Naive thymus-derived CD4-positive, alpha-beta T cell (primary cell): ENCODE measurements at regions of chrX and their contacts with region 1.

Region 1: DNA sequence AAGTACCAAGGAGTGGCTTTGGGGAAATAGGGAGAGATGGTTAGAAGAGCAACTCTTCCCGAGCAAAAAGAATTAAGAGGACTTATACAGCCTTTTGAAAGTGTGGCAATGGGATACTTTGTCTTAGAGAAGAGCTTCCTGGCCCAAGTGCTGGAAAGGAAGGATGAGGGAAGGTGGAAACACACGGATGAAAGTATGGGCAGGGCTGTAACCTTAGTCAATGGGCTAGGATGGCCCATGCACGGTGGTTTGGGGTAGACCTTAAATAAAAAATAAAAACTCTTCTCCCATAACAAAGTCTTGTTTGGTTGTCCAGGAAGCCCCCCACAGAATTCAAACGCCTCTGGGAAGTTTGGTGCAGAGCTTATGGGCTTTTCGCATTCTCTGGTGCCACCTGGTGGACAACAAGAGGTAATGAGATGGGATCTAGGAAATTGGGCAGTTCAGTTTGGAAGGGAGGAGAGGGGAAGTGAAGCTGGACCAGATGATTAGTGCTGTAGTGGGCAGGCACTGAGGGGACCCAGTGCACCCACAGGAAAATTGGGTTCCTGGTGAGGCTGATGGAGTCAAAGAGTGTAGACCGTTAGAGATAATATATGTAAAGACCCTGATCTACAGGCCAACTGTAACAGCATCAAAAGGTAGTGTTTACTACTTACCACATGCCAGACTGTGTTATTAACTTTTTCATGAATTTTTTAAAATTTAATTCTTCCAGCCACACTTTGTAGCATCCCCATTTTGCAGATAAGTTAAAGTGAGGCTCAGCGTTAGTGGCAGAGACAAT is 13.8 kb upstream of the ENOX2 start:
- DNase-seq: peak; percentile 5 to 46 (median 31)
- ATAC-seq: peak; percentile 70
- H3K4me3 ChIP-seq: no peak overlapping the region
- H3K4me3 Mint-ChIP-seq: no peak overlapping the region
- H3K27ac ChIP-seq: no peak overlapping the region
- H3K27ac Mint-ChIP-seq: no peak overlapping the region
- H3K4me1 ChIP-seq: no peaks in the 10 kb centered on the region
- H3K4me1 Mint-ChIP-seq: no peaks in the 10 kb centered on the region
- H3K27me3 ChIP-seq: no peaks in the 10 kb centered on the region
- H3K27me3 Mint-ChIP-seq: peaks cover 0 to 2% (median 0%) of the 10 kb centered on the region in 5 donors

Region 2: GRCh38 chrX:129600981-129601424 is 1315.8 kb before region 1 on chrX:
- CTCF ChIA-PET with region 1: no interaction called
- POLR2A ChIA-PET with region 1: no interaction called
- intact Hi-C with region 1: loop called in 1 of 2 experiments (anchors 2 kb)
- DNase-seq: peak in 5 of 9 donors; percentile 16 to 36 (median 27)
- ATAC-seq: peak; percentile 55
- H3K4me3 ChIP-seq: no peak overlapping the region
- H3K4me3 Mint-ChIP-seq: no peak overlapping the region
- H3K27ac ChIP-seq: no peak overlapping the region
- H3K27ac Mint-ChIP-seq: peak overlapping the region in 4 of 9 donors; percentile 3 to 47 (median 20)
- H3K4me1 ChIP-seq: peaks cover 5 to 7% of the 10 kb centered on the region in 2 donors
- H3K4me1 Mint-ChIP-seq: peaks cover 3 to 27% (median 14%) of the 10 kb centered on the region in 7 donors
- H3K27me3 ChIP-seq: no peaks in the 10 kb centered on the region
- H3K27me3 Mint-ChIP-seq: no peaks in the 10 kb centered on the region

Region 3: DNA sequence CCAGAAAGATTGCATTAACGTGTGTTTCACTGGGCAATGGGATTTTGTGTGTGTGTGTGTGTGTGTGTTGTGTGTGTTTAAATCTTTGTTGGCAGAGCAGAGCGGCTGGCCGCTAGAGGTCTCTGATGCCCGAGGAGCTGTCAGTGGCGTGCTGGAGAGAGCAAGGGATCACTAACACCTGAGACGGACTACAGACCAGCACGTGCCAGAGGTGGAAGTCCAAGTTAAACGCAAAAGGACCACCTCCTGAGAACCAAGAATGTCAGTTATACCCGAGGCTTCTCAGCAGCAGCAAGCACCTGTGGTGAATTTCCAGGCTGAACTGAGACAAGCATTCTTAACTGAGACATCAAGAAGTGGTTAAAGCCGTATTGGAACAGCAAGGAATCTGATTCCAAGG is 586.1 kb before region 1 on chrX:
- CTCF ChIA-PET with region 1: interaction called, 3 read pairs
- POLR2A ChIA-PET with region 1: no interaction called
- intact Hi-C with region 1: loop called (anchors 1 kb)
- DNase-seq: peak in 4 of 9 donors; percentile 8 to 19 (median 14)
- ATAC-seq: peak; percentile 49
- H3K4me3 ChIP-seq: no peak overlapping the region
- H3K4me3 Mint-ChIP-seq: no peak overlapping the region
- H3K27ac ChIP-seq: no peak overlapping the region
- H3K27ac Mint-ChIP-seq: no peak overlapping the region
- H3K4me1 ChIP-seq: no peaks in the 10 kb centered on the region
- H3K4me1 Mint-ChIP-seq: peaks cover 0 to 2% (median 0%) of the 10 kb centered on the region in 7 donors
- H3K27me3 ChIP-seq: no peaks in the 10 kb centered on the region
- H3K27me3 Mint-ChIP-seq: peaks cover 5 to 23% (median 15%) of the 10 kb centered on the region in 5 donors

Region 4: GRCh38 chrX:130539721-130540321 is 377.0 kb before region 1 on chrX:
- CTCF ChIA-PET with region 1: interaction called, 7 read pairs
- POLR2A ChIA-PET with region 1: no interaction called
- intact Hi-C with region 1: loop called in 1 of 2 experiments (anchors 1 kb)
- DNase-seq: peak in 6 of 9 donors; percentile 16 to 39 (median 23)
- ATAC-seq: no peak
- H3K4me3 ChIP-seq: no peak overlapping the region
- H3K4me3 Mint-ChIP-seq: no peak overlapping the region
- H3K27ac ChIP-seq: no peak overlapping the region
- H3K27ac Mint-ChIP-seq: no peak overlapping the region
- H3K4me1 ChIP-seq: no peaks in the 10 kb centered on the region
- H3K4me1 Mint-ChIP-seq: no peaks in the 10 kb centered on the region
- H3K27me3 ChIP-seq: no peaks in the 10 kb centered on the region
- H3K27me3 Mint-ChIP-seq: peaks cover 0 to 7% (median 0%) of the 10 kb centered on the region in 5 donors

Region 5: DNA sequence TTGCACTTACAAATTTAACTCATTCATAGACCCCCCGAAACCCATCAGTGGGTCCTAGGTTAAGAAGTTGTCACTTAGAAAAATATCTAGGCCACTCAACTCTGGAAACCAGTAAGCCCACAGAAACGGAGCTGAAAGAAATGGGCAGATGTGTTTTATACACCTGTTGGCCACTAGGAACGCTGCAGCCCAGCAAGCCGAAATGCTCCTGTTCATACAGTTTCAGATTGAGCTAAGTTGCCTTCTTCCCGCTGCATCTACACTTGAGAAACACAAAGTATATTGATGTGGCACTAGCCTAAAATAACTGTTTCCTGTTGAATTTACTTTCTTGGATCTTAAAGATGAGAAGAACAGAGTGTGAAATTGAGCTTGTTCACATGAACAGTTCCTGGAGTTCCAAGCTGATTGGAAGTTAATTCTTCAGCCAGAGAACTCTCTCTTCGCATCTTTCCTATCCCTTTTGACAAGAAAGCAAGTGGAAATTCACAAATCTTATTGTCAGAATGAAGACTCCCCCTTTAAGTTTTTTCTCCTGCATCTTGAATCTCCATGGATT is 340.9 kb before region 1 on chrX:
- CTCF ChIA-PET with region 1: interaction called, 4 read pairs
- POLR2A ChIA-PET with region 1: no interaction called
- intact Hi-C with region 1: loop called in 1 of 2 experiments (anchors 1 kb)
- DNase-seq: peak in 3 of 9 donors; percentile 3 to 19 (median 7)
- ATAC-seq: no peak
- H3K4me3 ChIP-seq: no peak overlapping the region
- H3K4me3 Mint-ChIP-seq: peak overlapping the region in 1 of 10 donors; percentile 45
- H3K27ac ChIP-seq: no peak overlapping the region
- H3K27ac Mint-ChIP-seq: no peak overlapping the region
- H3K4me1 ChIP-seq: no peaks in the 10 kb centered on the region
- H3K4me1 Mint-ChIP-seq: no peaks in the 10 kb centered on the region
- H3K27me3 ChIP-seq: no peaks in the 10 kb centered on the region
- H3K27me3 Mint-ChIP-seq: peaks cover 0 to 12% (median 7%) of the 10 kb centered on the region in 5 donors

Region 6: DNA sequence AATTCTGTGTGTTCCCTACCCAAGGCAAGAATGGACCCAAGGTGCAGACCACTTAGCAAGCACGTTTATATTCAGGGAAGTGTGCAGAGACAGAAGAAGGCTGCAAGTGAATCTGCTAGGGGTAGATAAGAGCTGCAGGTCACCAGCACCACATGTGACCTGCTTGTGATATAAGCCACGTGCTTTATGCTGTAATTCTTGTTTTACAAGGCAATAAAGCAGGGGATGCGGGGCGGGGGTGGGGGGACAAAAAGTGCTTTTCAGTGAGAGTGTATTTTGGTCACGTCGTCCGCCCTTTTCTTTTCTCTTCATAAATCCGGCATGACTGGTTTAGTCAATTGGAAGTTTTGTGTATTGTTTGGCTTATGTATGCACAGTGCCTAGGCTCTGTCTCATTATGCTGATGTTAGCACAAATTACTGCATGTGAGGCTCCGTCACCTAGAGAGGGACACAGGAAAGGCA is 322.3 kb before region 1 on chrX:
- CTCF ChIA-PET with region 1: no interaction called
- POLR2A ChIA-PET with region 1: no interaction called
- intact Hi-C with region 1: no loop called
- DNase-seq: no peak
- ATAC-seq: no peak
- H3K4me3 ChIP-seq: no peak overlapping the region
- H3K4me3 Mint-ChIP-seq: no peak overlapping the region
- H3K27ac ChIP-seq: no peak overlapping the region
- H3K27ac Mint-ChIP-seq: no peak overlapping the region
- H3K4me1 ChIP-seq: no peaks in the 10 kb centered on the region
- H3K4me1 Mint-ChIP-seq: no peaks in the 10 kb centered on the region
- H3K27me3 ChIP-seq: no peaks in the 10 kb centered on the region
- H3K27me3 Mint-ChIP-seq: peaks cover 0 to 13% (median 8%) of the 10 kb centered on the region in 5 donors